ENCODE measurements at regions of chr11 and their contacts with region 1.

Region 1: DNA sequence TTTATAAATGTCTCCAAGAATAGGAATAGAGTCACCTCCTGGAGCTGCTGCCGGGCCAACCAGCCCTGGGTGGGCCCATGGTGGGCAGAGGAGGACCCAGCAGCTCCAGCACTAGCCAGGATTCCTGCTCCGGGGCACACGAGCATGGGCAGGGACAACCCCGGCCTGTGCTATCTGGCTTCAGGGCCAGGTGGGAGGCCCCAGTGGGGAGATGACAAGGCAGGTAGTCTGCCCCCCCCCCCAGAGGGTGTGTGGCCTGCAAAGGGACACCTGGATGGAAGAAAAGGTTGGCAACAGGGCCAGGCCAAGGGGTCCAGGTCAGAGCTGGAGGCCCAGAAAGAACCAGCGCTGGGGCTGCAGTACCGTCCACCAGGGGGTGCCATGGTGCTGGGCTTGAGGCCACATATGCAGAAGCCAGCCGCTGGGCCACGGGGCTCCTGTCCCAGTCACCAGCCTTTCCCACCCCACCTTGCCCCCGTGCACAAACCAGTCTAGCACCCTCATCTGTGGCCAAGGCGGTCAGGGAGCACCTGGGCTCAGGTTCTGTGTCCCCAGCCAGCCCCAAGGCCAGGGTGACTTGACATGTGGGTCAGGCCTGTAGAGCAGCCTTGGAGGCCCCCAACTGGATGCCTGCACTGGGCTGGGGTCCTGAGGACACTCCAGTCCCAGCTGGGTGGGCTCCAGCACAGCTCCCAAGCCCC is 3.5 kb downstream of the TSPAN32 start:
- DNase-seq: peak; percentile 72 to 85 (median 82)
- H3K4me3 ChIP-seq: no peak overlapping the region
- H3K27ac ChIP-seq: peak overlapping the region in 10 of 59 donors; percentile 6 to 82 (median 48)
- H3K27me3 ChIP-seq: no peaks in the 10 kb centered on the region
- CTCF ChIP-seq: peak; percentile 46 to 96 (median 90)

Region 2: DNA sequence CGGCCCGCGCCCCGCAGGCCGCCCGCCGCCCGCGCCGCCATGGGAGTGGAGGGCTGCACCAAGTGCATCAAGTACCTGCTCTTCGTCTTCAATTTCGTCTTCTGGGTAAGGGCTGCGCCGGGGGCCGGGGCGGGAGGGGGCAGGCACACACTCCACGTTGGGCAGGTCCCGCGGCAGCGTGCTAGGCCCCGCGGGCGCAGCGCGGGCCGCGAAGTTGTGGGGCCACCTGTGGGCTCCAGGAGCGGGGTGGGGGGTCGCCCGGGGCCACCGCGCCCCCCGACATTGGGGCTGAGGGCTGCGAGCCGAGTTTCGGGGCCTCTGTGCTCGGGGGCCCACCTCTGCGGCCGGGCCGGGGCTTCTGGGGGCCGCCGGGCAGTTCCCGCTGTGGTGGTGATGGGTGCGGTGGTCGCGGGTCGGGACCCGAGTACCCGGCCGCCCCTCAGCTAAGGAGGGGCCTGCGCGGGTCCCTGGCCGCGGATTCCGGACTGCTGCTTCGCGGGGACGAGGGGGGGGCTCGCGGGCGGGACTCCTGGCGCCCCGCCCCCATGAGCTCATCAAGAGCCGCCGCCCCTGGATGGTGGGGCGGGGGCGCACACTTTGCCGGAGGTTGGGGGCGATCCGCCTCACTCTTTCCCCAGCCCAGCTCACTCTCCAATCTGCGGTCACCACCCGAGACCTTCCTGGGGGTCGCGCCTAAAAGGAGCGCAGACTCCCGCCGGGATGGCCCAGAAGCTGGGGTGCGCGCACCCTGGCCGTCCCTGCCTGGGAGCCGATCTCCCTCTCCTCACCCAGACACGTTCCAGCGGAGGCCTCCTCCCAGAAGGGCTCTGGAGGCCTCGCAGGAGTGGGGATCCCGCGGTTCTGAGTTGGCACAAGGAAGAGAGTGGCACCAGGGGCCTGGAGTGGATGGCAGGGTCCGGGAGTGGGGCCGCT is 72.5 kb after region 1 on chr11:
- intact Hi-C with region 1: loop called (anchors 5 kb)
- DNase-seq: peak in 7 of 10 donors; percentile 45 to 71 (median 58)
- H3K4me3 ChIP-seq: peak overlapping the region; percentile 71 to 100 (median 98)
- H3K27ac ChIP-seq: peak overlapping the region in 58 of 59 donors; percentile 49 to 97 (median 86)
- H3K27me3 ChIP-seq: no peaks in the 10 kb centered on the region
- CTCF ChIP-seq: no peak

Region 3: GRCh38 chr11:2400069-2400760 is 94.9 kb after region 1 on chr11 and contains the start of gene TSSC4:
- intact Hi-C with region 1: loop called in 1 of 2 experiments (anchors 5 kb)
- DNase-seq: peak; percentile 98 to 99 (median 98)
- H3K4me3 ChIP-seq: peak within 1 kb of the TSS; percentile 65 to 100 (median 98)
- H3K27ac ChIP-seq: peak within 1 kb of the TSS; percentile 68 to 99 (median 96)
- H3K27me3 ChIP-seq: no peaks in the 10 kb centered on the region
- CTCF ChIP-seq: peak; percentile 95 to 100 (median 100)
- total RNA-seq, gene TSSC4: 23.7 to 48.6 (median 34.3) TPM

Region 4: GRCh38 chr11:2526808-2527381 is 221.6 kb after region 1 on chr11:
- intact Hi-C with region 1: loop called (anchors 5 to 10 kb)
- DNase-seq: peak in 9 of 10 donors; percentile 2 to 47 (median 30)
- H3K4me3 ChIP-seq: peak overlapping the region in 1 of 59 donors; percentile 26
- H3K27ac ChIP-seq: peak overlapping the region in 4 of 59 donors; percentile 20 to 53 (median 28)
- H3K27me3 ChIP-seq: peaks cover 0 to 27% (median 0%) of the 10 kb centered on the region in 45 donors
- CTCF ChIP-seq: peak in 12 of 56 donors; percentile 7 to 35 (median 14)

Measured in dorsolateral prefrontal cortex (tissue), 120 donors.